ENCODE measurements at regions of chr6 and their contacts with region 1.

Region 1: GRCh38 chr6:63598049-63599036 is 26.1 kb downstream of the LOC128125822 start:
- DNase-seq: peak; percentile 52 to 88
- ATAC-seq: peak; percentile 94 to 100 (median 99)
- H3K4me3 ChIP-seq: peak overlapping the region; percentile 28
- H3K4me3 Mint-ChIP-seq: peak overlapping the region; percentile 91
- H3K27ac ChIP-seq: no peak overlapping the region
- H3K27ac Mint-ChIP-seq: peak overlapping the region in 1 of 2 donors; percentile 19
- H3K4me1 ChIP-seq: peaks cover 8% of the 10 kb centered on the region
- H3K4me1 Mint-ChIP-seq: peaks cover 11 to 13% of the 10 kb centered on the region in 2 donors
- H3K27me3 ChIP-seq: peaks cover 7% of the 10 kb centered on the region
- H3K27me3 Mint-ChIP-seq: peaks cover 3 to 10% of the 10 kb centered on the region in 2 donors
- CTCF ChIP-seq: peak; percentile 83

Region 2: DNA sequence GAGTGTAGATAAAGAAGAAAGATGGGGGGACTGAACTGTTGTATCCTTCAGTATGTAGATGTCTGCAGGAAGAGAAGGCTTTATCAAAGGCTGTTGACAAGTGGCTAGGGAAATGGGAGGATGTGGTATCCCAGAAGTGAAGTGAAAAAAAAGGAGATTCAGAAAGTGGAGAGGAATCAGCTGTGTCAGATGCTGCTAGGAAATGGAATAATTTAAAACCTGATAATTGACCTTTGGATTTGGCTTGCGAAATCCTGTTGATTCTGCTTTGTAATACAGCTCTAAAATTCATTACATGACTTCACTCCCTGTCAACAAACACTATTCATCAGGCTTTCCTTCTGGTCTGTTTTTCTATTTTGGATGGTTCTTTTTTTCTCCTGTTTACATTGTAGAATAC is 78.9 kb after region 1 on chr6:
- intact Hi-C with region 1: loop called (anchors 10 kb)
- DNase-seq: no peak
- ATAC-seq: no peak
- H3K4me3 ChIP-seq: no peak overlapping the region
- H3K4me3 Mint-ChIP-seq: no peak overlapping the region
- H3K27ac ChIP-seq: no peak overlapping the region
- H3K27ac Mint-ChIP-seq: no peak overlapping the region
- H3K4me1 ChIP-seq: peaks cover 4% of the 10 kb centered on the region
- H3K4me1 Mint-ChIP-seq: peaks cover 30 to 31% of the 10 kb centered on the region in 2 donors
- H3K27me3 ChIP-seq: no peaks in the 10 kb centered on the region
- H3K27me3 Mint-ChIP-seq: no peaks in the 10 kb centered on the region
- CTCF ChIP-seq: no peak

Region 3: DNA sequence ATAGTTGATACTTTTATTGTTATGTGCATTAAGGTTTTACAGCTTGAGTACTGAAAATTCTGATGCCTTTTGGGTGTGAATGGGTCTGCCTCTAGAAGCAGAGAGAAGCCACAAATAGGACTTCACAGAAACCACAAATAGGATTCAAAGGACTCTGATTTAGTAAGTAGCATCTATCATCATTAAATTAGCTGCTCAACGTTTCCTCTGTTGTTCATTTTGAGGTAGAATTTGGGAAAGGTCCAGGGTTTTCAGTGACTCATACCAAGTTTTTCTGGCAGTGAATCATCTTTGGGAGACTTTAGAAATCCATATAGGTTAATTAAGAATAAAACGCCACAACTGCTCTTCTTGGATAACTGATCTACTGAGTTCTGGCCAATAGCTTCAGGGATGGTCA is 142.4 kb after region 1 on chr6:
- intact Hi-C with region 1: no loop called
- DNase-seq: no peak
- ATAC-seq: no peak
- H3K4me3 ChIP-seq: no peak overlapping the region
- H3K4me3 Mint-ChIP-seq: no peak overlapping the region
- H3K27ac ChIP-seq: no peak overlapping the region
- H3K27ac Mint-ChIP-seq: no peak overlapping the region
- H3K4me1 ChIP-seq: no peaks in the 10 kb centered on the region
- H3K4me1 Mint-ChIP-seq: peaks cover under 1 to 6% of the 10 kb centered on the region in 2 donors
- H3K27me3 ChIP-seq: no peaks in the 10 kb centered on the region
- H3K27me3 Mint-ChIP-seq: no peaks in the 10 kb centered on the region
- CTCF ChIP-seq: no peak

Region 4: DNA sequence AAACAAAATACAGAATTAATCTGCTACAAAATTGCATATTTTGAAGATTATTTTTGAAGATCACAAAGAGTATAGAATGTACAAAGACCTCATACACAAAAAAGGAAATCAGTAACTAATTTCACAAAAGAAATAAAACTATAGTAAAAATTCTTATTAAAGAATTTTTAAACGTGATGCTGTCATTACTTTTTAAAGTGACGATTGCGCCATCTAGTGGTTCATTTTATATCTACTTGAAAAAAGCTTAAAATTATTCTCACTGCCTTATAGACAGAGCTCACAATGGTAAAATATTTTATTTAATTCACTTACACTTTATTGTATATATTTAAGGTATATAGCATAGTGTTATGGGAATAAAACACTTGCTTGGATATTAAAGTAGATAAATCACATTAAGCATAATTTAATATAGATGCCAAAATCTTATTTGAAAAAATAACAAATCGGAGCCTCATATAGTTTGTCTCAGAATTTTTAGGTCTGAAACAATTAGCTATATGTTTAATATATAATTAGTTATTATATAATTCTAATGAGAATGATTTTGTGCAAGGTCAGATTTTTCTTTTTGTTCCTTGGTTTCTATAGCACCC is 166.1 kb after region 1 on chr6:
- intact Hi-C with region 1: loop called (anchors 1 kb)
- DNase-seq: peak in 1 of 2 donors; percentile 77
- ATAC-seq: peak in 1 of 3 donors; percentile 55
- H3K4me3 ChIP-seq: no peak overlapping the region
- H3K4me3 Mint-ChIP-seq: no peak overlapping the region
- H3K27ac ChIP-seq: no peak overlapping the region
- H3K27ac Mint-ChIP-seq: no peak overlapping the region
- H3K4me1 ChIP-seq: no peaks in the 10 kb centered on the region
- H3K4me1 Mint-ChIP-seq: no peaks in the 10 kb centered on the region
- H3K27me3 ChIP-seq: peaks cover 2% of the 10 kb centered on the region
- H3K27me3 Mint-ChIP-seq: peaks cover 0 to 7% of the 10 kb centered on the region in 2 donors
- CTCF ChIP-seq: peak; percentile 74

Region 5: GRCh38 chr6:63783096-63783495 is 184.8 kb after region 1 on chr6:
- intact Hi-C with region 1: no loop called
- DNase-seq: no peak
- ATAC-seq: no peak
- H3K4me3 ChIP-seq: no peak overlapping the region
- H3K4me3 Mint-ChIP-seq: no peak overlapping the region
- H3K27ac ChIP-seq: no peak overlapping the region
- H3K27ac Mint-ChIP-seq: no peak overlapping the region
- H3K4me1 ChIP-seq: no peaks in the 10 kb centered on the region
- H3K4me1 Mint-ChIP-seq: no peaks in the 10 kb centered on the region
- H3K27me3 ChIP-seq: no peaks in the 10 kb centered on the region
- H3K27me3 Mint-ChIP-seq: peaks cover 0 to 7% of the 10 kb centered on the region in 2 donors
- CTCF ChIP-seq: no peak

Region 6: DNA sequence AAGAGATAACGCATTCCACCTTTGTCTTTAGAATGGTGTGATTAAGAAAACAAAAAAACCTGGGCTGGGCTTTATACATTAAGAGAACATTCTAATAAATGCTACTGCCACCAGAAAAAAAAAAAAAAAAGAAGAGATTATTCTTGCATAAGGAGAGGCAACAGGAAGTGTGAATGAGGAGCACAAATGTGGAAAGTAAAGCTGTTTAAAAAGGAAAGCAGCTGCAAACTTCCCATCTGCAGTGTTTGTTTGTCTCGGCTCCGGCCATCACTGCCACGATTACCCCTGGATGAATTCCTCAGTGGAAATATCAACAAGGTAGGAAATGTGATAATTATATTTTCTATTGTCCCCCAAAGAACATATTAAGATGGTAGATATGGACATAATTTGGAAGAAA is 261.2 kb after region 1 on chr6:
- intact Hi-C with region 1: no loop called
- DNase-seq: no peak
- ATAC-seq: no peak
- H3K4me3 ChIP-seq: no peak overlapping the region
- H3K4me3 Mint-ChIP-seq: no peak overlapping the region
- H3K27ac ChIP-seq: no peak overlapping the region
- H3K27ac Mint-ChIP-seq: no peak overlapping the region
- H3K4me1 ChIP-seq: no peaks in the 10 kb centered on the region
- H3K4me1 Mint-ChIP-seq: no peaks in the 10 kb centered on the region
- H3K27me3 ChIP-seq: no peaks in the 10 kb centered on the region
- H3K27me3 Mint-ChIP-seq: no peaks in the 10 kb centered on the region
- CTCF ChIP-seq: no peak

Measured in natural killer cell (primary cell).